ENCODE measurements at regions of chr11 and their contacts with region 1.

Region 1: DNA sequence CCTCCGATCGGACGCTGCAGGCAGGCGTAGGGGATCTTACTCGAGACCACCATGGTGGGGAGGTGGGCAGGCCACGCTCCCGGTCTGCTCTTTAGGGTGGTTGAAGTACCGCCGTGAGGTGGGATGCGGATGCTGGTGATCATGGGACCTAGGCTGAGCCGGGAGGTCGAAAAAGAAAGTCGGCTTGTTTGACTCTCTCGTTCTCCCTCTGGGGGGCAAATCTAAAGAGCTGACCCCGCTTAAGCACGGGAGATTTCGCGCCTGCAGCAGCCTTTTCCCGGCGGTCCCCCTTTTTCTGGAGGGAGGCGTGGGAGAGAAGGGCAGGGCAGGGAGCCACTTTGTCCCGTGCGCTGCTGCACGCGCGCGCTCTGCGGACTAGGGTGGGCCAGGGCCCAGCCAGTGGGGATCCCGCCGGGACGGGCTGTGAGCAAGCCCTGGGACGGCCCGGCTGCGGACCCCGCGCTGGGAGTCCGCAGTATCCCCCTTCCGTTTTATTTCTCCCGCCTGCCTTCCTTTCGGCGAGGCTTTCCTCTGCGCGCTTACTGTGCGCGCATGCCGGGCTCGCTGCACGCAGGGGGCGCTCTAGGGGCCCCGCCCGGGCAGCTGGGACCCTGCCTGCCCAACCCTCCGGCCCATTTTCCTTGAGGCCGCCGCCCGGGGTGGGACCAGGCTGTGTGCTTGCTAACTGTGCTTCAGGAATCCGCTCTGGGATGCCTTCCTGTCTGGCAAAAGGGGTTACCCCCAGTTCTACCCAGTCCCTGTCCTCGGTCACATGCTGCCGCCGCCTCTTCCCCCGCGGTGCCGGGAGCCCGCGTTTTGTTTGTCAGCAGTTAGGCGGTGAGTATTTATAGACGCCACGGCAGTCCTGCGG is 81.0 kb downstream of the PRR5L start:
- DNase-seq: peak; percentile 82
- H3K4me3 Mint-ChIP-seq: peak overlapping the region; percentile 92
- H3K27ac Mint-ChIP-seq: peak overlapping the region; percentile 84
- H3K4me1 Mint-ChIP-seq: peaks cover 43% of the 10 kb centered on the region
- H3K27me3 Mint-ChIP-seq: peaks cover 9% of the 10 kb centered on the region

Region 2: DNA sequence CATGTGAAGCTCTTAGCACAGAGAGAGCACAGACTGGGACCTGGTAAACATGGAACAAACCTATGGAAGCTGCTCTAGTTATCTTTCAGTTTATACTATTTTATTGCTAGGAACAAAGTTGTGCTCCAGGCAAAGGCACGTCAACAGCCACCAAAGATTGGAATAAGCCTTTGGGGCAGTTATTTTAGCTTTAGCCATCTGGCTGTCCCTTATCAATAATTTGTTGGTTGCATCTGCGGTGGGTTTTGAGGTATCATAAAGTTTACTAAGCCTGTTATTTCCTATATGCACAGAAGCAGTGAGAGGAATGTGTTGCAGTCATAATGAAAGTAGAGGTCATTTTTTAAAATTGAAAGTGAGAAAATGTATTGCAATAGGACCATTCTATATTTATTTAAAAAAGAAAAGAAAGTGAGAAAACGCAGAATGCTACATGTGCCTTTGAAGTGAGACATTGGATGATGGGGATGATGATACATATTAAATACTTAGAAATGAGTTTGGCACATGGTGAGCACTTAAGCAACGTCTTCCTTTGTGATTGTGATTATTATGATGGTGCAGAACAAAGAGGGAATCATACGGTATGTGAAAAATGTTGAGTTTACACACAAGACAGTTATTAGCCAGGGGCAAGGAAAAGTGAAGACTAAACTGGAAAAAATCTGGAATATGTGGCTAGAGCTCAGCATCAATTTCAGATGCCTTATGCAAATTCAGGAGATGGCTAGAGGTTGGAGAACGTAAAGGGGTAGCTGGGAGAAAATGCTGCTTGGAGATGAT is 22.7 kb before region 1 on chr11:
- CTCF ChIA-PET with region 1: interaction called, 40 read pairs
- POLR2A ChIA-PET with region 1: interaction called, 12 read pairs
- intact Hi-C with region 1: loop called (anchors 1 kb)
- DNase-seq: no peak
- H3K4me3 Mint-ChIP-seq: peak overlapping the region; percentile 31
- H3K27ac Mint-ChIP-seq: peak overlapping the region; percentile 72
- H3K4me1 Mint-ChIP-seq: peaks cover 80% of the 10 kb centered on the region
- H3K27me3 Mint-ChIP-seq: peaks cover 7% of the 10 kb centered on the region

Region 3: GRCh38 chr11:36390963-36391471 is 13.9 kb after region 1 on chr11:
- CTCF ChIA-PET with region 1: interaction called, 13 read pairs
- POLR2A ChIA-PET with region 1: interaction called, 20 read pairs
- intact Hi-C with region 1: loop called (anchors 1 kb)
- DNase-seq: peak; percentile 68
- H3K4me3 Mint-ChIP-seq: peak overlapping the region; percentile 36
- H3K27ac Mint-ChIP-seq: peak overlapping the region; percentile 96
- H3K4me1 Mint-ChIP-seq: peaks cover 82% of the 10 kb centered on the region
- H3K27me3 Mint-ChIP-seq: no peaks in the 10 kb centered on the region

Region 4: GRCh38 chr11:36411202-36411640 is 34.1 kb after region 1 on chr11:
- CTCF ChIA-PET with region 1: interaction called, 17 read pairs
- POLR2A ChIA-PET with region 1: interaction called, 7 read pairs
- intact Hi-C with region 1: loop called (anchors 1 kb)
- DNase-seq: peak; percentile 40
- H3K4me3 Mint-ChIP-seq: peak overlapping the region; percentile 10
- H3K27ac Mint-ChIP-seq: peak overlapping the region; percentile 95
- H3K4me1 Mint-ChIP-seq: peaks cover 67% of the 10 kb centered on the region
- H3K27me3 Mint-ChIP-seq: no peaks in the 10 kb centered on the region

Region 5: GRCh38 chr11:36450110-36450572 is 73.0 kb after region 1 on chr11:
- CTCF ChIA-PET with region 1: interaction called, 6 read pairs
- POLR2A ChIA-PET with region 1: interaction called, 3 read pairs
- intact Hi-C with region 1: loop called (anchors 5 kb)
- DNase-seq: no peak
- H3K4me3 Mint-ChIP-seq: no peak overlapping the region
- H3K27ac Mint-ChIP-seq: no peak overlapping the region
- H3K4me1 Mint-ChIP-seq: peaks cover 46% of the 10 kb centered on the region
- H3K27me3 Mint-ChIP-seq: no peaks in the 10 kb centered on the region

Region 6: DNA sequence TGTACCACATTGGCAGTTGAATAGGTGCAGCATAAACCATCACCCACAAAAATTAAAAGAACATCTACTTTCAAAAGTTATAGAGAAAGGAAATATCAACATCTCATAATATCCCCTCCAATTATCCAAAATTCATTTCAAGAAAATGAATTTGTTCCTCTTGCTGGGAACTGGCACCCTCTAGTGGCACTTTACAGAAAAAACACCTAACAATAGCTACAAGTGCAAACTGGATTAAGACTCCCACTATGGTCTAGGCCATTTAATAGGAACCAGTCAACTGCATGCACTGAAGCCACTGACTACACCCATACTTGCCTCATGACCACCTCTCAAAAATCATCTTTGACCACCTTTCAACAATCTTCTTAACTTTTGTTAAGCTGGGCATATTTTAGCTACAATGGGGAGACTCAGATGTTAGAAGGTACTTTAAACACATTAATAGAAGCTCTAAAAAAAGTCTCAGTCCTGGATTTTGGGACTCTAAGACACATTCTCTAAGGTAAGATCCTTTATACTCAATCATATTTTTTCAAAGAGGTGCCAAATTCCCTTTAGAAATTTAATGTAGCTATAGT is 115.7 kb after region 1 on chr11:
- CTCF ChIA-PET with region 1: interaction called, 31 read pairs
- POLR2A ChIA-PET with region 1: no interaction called
- intact Hi-C with region 1: no loop called
- DNase-seq: no peak
- H3K4me3 Mint-ChIP-seq: no peak overlapping the region
- H3K27ac Mint-ChIP-seq: no peak overlapping the region
- H3K4me1 Mint-ChIP-seq: peaks cover 16% of the 10 kb centered on the region
- H3K27me3 Mint-ChIP-seq: no peaks in the 10 kb centered on the region